CD4-positive, alpha-beta T cell (primary cell): ENCODE measurements at regions of chr2 and their contacts with region 1.

Region 1: DNA sequence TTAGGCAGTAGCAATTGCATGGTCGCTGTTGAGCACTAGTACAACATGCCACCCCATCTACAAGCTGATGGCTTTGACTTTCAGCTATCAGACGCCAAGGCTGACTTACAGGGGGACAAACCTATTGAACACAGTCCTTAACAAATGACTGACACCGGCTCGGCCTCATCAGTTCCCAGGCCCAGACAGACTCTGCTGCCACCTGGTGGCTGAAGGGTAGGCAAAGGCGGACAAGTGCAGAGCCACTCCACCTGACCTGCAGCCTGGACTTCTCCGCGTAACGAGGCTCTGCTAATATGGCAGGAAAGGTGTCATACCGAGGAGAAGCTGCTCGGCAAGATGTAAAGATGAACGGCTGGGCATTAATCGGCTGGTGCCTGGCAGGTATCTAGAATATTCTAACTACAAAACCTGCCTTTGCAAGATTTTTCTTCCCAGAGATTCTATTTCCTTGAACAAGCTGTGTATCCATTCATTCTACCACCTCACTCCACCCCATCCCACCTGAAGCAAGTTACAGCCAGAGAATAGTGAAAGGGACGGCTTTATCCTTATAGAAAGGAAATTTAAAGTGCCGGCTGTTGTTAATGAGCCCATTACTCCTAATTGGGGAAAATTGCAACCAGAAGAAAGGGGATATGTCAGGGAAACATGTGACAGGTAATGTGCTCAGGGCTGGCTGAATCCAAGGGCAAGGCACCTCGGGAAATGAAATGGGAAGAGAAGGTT is 67.4 kb downstream of the STEAP3 start:
- DNase-seq: peak in 11 of 14 experiments; percentile 51 to 75 (median 66)
- ATAC-seq: no peak
- H3K4me3 ChIP-seq: no peak overlapping the region
- H3K4me3 Mint-ChIP-seq: no peak overlapping the region
- H3K27ac ChIP-seq: no peak overlapping the region
- H3K27ac Mint-ChIP-seq: no peak overlapping the region
- H3K4me1 ChIP-seq: no peaks in the 10 kb centered on the region
- H3K4me1 Mint-ChIP-seq: no peaks in the 10 kb centered on the region
- H3K27me3 ChIP-seq: no peaks in the 10 kb centered on the region
- H3K27me3 Mint-ChIP-seq: no peaks in the 10 kb centered on the region
- CTCF ChIP-seq: no peak

Region 2: GRCh38 chr2:119264781-119265692 is 26.0 kb before region 1 on chr2:
- CTCF ChIA-PET with region 1: interaction called, 3 read pairs
- POLR2A ChIA-PET with region 1: no interaction called
- intact Hi-C with region 1: loop called in 1 of 2 experiments (anchors 1 kb)
- DNase-seq: peak in 7 of 14 experiments; percentile 8 to 37 (median 15)
- ATAC-seq: no peak
- H3K4me3 ChIP-seq: no peak overlapping the region
- H3K4me3 Mint-ChIP-seq: no peak overlapping the region
- H3K27ac ChIP-seq: no peak overlapping the region
- H3K27ac Mint-ChIP-seq: no peak overlapping the region
- H3K4me1 ChIP-seq: no peaks in the 10 kb centered on the region
- H3K4me1 Mint-ChIP-seq: no peaks in the 10 kb centered on the region
- H3K27me3 ChIP-seq: peaks cover 0 to 2% of the 10 kb centered on the region in 2 experiments
- H3K27me3 Mint-ChIP-seq: peaks cover 12% of the 10 kb centered on the region
- CTCF ChIP-seq: peak; percentile 57

Region 3: DNA sequence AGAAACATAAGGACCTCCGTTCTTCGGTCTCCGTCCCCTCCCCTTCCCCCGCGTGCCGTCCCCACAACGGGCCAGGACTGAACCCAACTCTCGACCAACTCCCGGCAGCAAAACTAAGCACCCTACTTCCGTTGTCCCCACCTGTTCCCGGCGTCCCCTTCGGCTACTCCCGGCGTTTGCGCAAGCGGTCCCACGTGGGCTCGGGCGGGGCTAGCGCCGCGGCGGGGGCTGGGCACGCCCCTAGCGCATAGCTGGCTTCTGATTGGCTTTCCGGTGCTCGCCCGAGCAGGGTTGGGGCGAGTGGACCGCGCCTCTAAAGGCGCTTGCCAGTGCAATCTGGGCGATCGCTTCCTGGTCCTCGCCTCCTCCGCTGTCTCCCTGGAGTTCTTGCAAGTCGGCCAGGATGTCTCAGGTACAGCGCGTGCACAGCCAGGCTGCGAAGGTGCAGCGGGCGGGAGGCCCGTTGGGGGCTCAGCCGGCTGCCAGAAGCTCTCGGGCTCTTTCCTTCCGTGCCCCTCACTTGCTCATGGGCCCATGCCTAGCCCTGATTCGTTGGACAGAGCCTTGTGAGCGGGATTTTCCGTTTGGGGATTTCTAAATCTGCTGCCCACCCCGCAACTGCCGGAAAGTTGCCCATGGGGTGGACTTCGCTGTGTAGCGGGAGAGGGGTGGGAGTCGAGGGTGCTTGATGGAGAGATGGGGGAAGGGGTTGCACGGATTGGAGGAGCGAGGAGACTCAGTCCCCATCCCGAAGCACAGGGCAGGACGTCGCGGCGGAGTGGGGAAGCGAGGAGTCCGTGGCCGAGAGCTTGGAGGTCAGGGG is 75.8 kb after region 1 on chr2 and contains the starts of genes C2orf76 and DBI:
- CTCF ChIA-PET with region 1: no interaction called
- POLR2A ChIA-PET with region 1: no interaction called
- intact Hi-C with region 1: no loop called
- DNase-seq: peak; percentile 82 to 97 (median 88)
- ATAC-seq: peak; percentile 93
- H3K4me3 ChIP-seq: peak within 1 kb of the TSS; percentile 94
- H3K4me3 Mint-ChIP-seq: peak within 1 kb of the TSS; percentile 91
- H3K27ac ChIP-seq: peak within 1 kb of the TSS; percentile 59 to 76
- H3K27ac Mint-ChIP-seq: peak within 1 kb of the TSS; percentile 89
- H3K4me1 ChIP-seq: peaks cover 41% of the 10 kb centered on the region
- H3K4me1 Mint-ChIP-seq: peaks cover 59% of the 10 kb centered on the region
- H3K27me3 ChIP-seq: no peaks in the 10 kb centered on the region
- H3K27me3 Mint-ChIP-seq: no peaks in the 10 kb centered on the region
- CTCF ChIP-seq: no peak
- total RNA-seq, gene C2orf76: 2.8 to 4.5 TPM
- total RNA-seq, gene DBI: 23.6 to 27.4 TPM